ENCODE measurements at regions of chr15 and their contacts with region 1.

Region 1: DNA sequence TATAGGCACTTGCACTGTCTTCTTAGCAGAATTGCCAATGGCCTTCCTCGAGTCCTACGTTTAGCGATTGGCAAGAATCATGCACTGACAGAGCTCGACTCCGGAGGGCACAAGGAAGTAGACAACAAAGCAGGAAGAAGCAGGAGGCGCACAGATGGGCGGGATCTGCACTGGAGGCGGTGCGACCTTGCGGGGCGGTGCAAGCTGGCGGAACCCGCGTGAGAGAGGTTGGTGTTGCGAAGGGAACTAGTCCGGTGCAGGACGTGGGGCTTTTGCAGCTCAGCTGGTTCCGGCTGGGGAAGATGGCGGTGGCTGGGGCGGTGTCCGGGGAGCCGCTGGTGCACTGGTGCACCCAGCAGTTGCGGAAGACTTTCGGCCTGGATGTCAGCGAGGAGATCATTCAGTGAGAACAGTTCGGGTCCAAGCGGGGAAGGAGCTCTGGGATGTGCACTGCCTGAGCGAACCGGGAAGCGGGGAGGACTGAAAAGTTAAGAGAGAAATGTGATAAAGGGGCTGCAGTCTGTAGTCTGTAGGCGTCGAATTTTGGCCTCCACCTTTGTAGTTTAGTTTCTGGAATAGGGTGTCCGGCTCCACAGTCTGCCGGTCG is at the start of gene TRIP4:
- DNase-seq: peak; percentile 86 to 97 (median 90)
- ATAC-seq: peak; percentile 100
- H3K4me3 ChIP-seq: peak within 1 kb of the TSS; percentile 75
- H3K27ac ChIP-seq: peak within 1 kb of the TSS; percentile 87
- H3K4me1 ChIP-seq: peaks cover 0 to 12% of the 10 kb centered on the region in 2 experiments; a peak in 2 of 5 replicates
- H3K27me3 ChIP-seq: no peaks in the 10 kb centered on the region
- CTCF ChIP-seq: peak; percentile 19 to 33 (median 27); a peak in 2 of 6 replicates
- EP300 ChIP-seq: peak; percentile 58
- POLR2A ChIP-seq: peak; percentile 91
- RAD21 ChIP-seq: peak in 1 of 2 experiments; percentile 49; a peak in 3 of 4 replicates
- polyA plus RNA-seq, gene TRIP4: 11.7 to 16.7 TPM

Region 2: GRCh38 chr15:64187396-64188191 is 200.1 kb before region 1 on chr15:
- CTCF ChIA-PET with region 1: interaction called, 11 read pairs
- POLR2A ChIA-PET with region 1: no interaction called
- in situ Hi-C with region 1: no loop called
- intact Hi-C with region 1: no loop called
- DNase-seq: no peak
- ATAC-seq: no peak
- H3K4me3 ChIP-seq: no peak overlapping the region
- H3K27ac ChIP-seq: no peak overlapping the region
- H3K4me1 ChIP-seq: peaks cover 0 to 4% of the 10 kb centered on the region in 2 experiments; a peak in 1 of 5 replicates
- H3K27me3 ChIP-seq: no peaks in the 10 kb centered on the region
- CTCF ChIP-seq: no peak
- EP300 ChIP-seq: no peak
- POLR2A ChIP-seq: no peak
- RAD21 ChIP-seq: no peak

Region 3: DNA sequence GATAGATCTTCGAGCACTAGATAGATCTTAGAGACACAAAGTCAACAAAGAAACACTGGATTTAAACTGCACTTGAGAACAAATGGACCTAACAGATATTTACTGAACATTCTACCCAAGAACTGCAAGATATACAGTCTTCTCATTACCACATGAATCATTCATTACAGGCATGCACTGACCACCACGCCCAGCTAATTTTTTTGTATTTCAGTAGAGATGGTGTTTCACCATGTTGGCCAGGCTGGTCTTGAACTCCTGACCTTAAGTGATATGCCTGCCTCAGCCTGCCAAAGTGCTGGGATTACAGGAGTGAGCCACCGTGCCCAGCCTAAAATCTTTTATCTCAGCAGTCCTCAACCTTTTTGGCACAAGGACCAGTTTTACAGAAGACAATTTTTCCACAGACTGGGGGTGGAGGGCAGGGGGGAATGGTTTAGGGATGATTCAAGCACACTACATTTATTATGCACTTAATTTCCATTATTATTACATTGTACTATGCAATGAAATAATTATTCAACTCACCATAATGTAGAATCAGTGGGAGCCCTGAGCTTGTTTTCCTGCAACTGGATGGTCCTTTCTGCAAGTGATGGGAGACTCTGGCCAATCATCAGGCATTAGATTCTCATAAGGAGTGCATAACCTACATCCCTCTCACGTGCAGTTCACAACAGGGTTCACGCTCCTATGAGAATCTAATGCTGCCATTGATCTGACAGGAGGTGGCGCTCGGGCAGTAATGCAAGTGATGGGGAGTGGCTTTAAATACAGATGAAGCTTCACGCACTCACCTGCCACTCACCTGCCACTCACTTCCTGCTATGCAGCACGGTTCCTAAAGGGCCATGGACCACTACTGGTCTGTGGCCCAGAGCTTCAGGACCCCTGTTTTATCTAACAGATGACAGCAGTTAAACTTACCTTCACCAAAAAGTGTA is 53.4 kb before region 1 on chr15:
- CTCF ChIA-PET with region 1: no interaction called
- POLR2A ChIA-PET with region 1: no interaction called
- in situ Hi-C with region 1: no loop called
- intact Hi-C with region 1: no loop called
- DNase-seq: peak in 1 of 4 experiments; percentile 24
- ATAC-seq: peak; percentile 69
- H3K4me3 ChIP-seq: no peak overlapping the region
- H3K27ac ChIP-seq: peak overlapping the region; percentile 38; the same call in 1 of the 3 replicates
- H3K4me1 ChIP-seq: peaks cover 0 to 5% of the 10 kb centered on the region in 2 experiments; a peak in 1 of 5 replicates
- H3K27me3 ChIP-seq: no peaks in the 10 kb centered on the region
- CTCF ChIP-seq: peak in 1 of 3 experiments; percentile 5; a peak in 1 of 6 replicates
- EP300 ChIP-seq: no peak
- POLR2A ChIP-seq: no peak
- RAD21 ChIP-seq: peak in 1 of 2 experiments; percentile 29; a peak in 1 of 4 replicates

Region 4: GRCh38 chr15:64344651-64345294 is 42.9 kb before region 1 on chr15:
- CTCF ChIA-PET with region 1: no interaction called
- POLR2A ChIA-PET with region 1: no interaction called
- in situ Hi-C with region 1: no loop called
- intact Hi-C with region 1: no loop called
- DNase-seq: no peak
- ATAC-seq: no peak
- H3K4me3 ChIP-seq: no peak overlapping the region
- H3K27ac ChIP-seq: no peak overlapping the region
- H3K4me1 ChIP-seq: no peaks in the 10 kb centered on the region; a peak in 1 of 5 replicates
- H3K27me3 ChIP-seq: no peaks in the 10 kb centered on the region
- CTCF ChIP-seq: no peak
- EP300 ChIP-seq: no peak
- POLR2A ChIP-seq: no peak
- RAD21 ChIP-seq: no peak

Region 5: GRCh38 chr15:64398575-64398974 is 10.9 kb after region 1 on chr15:
- CTCF ChIA-PET with region 1: no interaction called
- POLR2A ChIA-PET with region 1: interaction called, 21 read pairs
- in situ Hi-C with region 1: no loop called
- intact Hi-C with region 1: no loop called
- DNase-seq: no peak
- ATAC-seq: no peak
- H3K4me3 ChIP-seq: no peak overlapping the region
- H3K27ac ChIP-seq: no peak overlapping the region
- H3K4me1 ChIP-seq: no peaks in the 10 kb centered on the region
- H3K27me3 ChIP-seq: no peaks in the 10 kb centered on the region
- CTCF ChIP-seq: no peak
- EP300 ChIP-seq: no peak
- POLR2A ChIP-seq: no peak
- RAD21 ChIP-seq: no peak

Region 6: DNA sequence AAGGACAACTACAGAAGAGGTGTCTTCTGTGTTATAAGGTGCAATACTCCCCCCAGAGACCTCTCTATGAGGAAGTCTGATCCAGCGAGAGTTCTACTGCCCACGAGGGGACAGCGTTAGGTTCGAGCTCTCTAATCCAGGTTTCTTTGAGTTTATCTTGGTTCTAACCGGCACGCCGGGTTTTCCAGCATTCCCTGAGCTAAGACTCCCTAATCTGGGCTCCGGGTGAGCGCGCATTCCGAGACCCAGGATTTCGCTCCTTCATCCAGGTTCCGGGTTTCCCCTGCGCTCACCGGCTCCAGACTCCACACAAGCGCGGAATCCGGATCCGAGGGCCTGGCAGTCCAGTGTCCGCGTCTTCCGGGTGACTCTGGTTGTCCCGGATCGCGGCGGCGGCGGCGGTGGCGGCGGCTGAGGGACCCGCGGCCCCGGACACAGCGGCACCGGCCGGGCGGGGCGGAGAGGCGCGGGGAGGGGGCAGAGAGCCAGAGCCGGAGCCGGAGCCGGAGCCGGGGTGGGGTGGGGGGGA is 72.6 kb after region 1 on chr15 and contains the start of gene ZNF609:
- CTCF ChIA-PET with region 1: no interaction called
- POLR2A ChIA-PET with region 1: interaction called, 3 read pairs
- in situ Hi-C with region 1: no loop called
- intact Hi-C with region 1: loop called (anchors 2 kb)
- DNase-seq: peak; percentile 95
- ATAC-seq: peak; percentile 73
- H3K4me3 ChIP-seq: peak within 1 kb of the TSS; percentile 55
- H3K27ac ChIP-seq: peak within 1 kb of the TSS; percentile 88
- H3K4me1 ChIP-seq: peaks cover 6 to 60% of the 10 kb centered on the region in 2 experiments; a peak in 4 of 5 replicates
- H3K27me3 ChIP-seq: no peaks in the 10 kb centered on the region
- CTCF ChIP-seq: no peak
- EP300 ChIP-seq: peak; percentile 62
- POLR2A ChIP-seq: peak; percentile 39; the same call in 1 of the 2 replicates
- RAD21 ChIP-seq: peak in 1 of 2 experiments; percentile 33; a peak in 1 of 4 replicates
- polyA plus RNA-seq, gene ZNF609: 3.0 to 7.6 TPM